HepG2 (cell line): ENCODE measurements at regions of chr20 and their contacts with region 1.

Region 1: GRCh38 chr20:16573001-16573965 is at the start of gene KIF16B:
- DNase-seq: peak; percentile 94
- ATAC-seq: peak; percentile 87
- H3K4me3 ChIP-seq: peak within 1 kb of the TSS; percentile 70 to 92 (median 85)
- H3K27ac ChIP-seq: peak within 1 kb of the TSS; percentile 77
- H3K4me1 ChIP-seq: peaks cover 62% of the 10 kb centered on the region
- H3K27me3 ChIP-seq: no peaks in the 10 kb centered on the region; a peak in 1 of 5 replicates
- CTCF ChIP-seq: peak; percentile 61
- EP300 ChIP-seq: peak; percentile 65 to 67; a peak in 2 of 4 replicates
- POLR2A ChIP-seq: peak; percentile 84 to 91
- RAD21 ChIP-seq: peak; percentile 81
- total RNA-seq, gene KIF16B: 18.0 and 23.3 TPM in 2 replicates

Region 2: DNA sequence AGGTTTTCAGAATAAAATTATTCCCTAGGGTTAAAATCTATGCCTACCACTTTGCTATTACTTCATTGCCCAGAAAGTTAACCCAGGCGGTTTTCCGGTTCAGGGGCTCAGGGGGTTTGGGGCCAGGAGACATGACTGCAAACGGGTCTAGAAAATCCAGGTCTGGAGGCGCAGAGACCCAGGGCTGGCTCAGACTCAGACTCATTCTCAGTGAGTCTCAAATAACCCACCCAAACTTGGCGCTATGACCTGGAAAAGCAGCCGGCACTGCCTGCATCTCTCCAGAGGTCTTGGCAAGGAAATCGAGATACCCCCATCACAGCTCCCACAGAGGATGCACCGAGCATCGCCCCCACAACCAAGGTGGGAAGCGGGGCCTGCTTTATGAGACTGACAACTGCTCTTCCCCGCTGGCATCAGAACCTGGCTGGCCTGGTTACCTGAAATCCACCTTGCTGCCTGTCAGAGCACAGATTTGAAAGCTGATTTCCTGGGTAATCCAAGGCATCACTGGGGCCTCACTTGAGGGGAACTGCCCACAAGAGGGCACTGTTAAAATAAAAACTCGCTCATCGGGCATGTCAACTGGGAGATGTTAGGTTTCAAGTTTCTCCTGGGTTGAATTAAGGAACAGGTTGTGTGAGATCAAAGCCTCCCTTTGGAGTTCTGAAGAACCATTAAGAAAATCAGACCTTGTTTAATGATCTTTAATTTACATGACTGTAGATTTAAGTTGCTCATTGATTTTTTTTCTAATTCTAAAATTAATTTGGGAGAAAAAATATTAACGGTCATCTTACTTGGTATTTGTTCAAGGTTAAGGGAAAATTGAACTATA is 55.1 kb before region 1 on chr20:
- CTCF ChIA-PET with region 1: no interaction called
- POLR2A ChIA-PET with region 1: no interaction called
- in situ Hi-C with region 1: no loop called
- intact Hi-C with region 1: loop called (anchors 5 kb)
- DNase-seq: peak; percentile 60
- ATAC-seq: peak; percentile 97
- H3K4me3 ChIP-seq: no peak overlapping the region
- H3K27ac ChIP-seq: no peak overlapping the region
- H3K4me1 ChIP-seq: no peaks in the 10 kb centered on the region
- H3K27me3 ChIP-seq: no peaks in the 10 kb centered on the region
- CTCF ChIP-seq: peak; percentile 71
- EP300 ChIP-seq: no peak
- POLR2A ChIP-seq: no peak
- RAD21 ChIP-seq: peak; percentile 82

Region 3: DNA sequence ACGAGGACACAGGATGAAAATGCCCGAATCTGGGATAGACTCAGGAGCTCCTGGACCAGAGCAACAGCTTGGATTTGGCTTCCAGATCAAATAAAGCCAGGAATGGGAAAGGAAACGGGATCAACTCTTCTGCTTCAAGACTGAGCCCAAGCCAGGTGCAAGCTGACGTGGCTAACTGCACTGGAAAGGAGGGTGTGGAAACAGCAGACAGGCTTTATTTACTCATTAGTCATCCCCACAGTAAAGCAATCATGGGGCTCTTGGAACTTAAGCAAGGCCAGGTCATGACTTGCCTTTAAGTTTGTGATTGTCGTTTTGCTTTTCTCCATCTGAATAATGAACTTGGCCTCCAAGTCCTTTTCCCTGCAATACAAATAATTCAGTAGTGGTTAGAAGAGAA is 45.2 kb before region 1 on chr20:
- CTCF ChIA-PET with region 1: no interaction called
- POLR2A ChIA-PET with region 1: no interaction called
- in situ Hi-C with region 1: no loop called
- intact Hi-C with region 1: loop called (anchors 2 kb)
- DNase-seq: peak; percentile 80
- ATAC-seq: peak; percentile 98
- H3K4me3 ChIP-seq: no peak overlapping the region
- H3K27ac ChIP-seq: peak overlapping the region; percentile 8
- H3K4me1 ChIP-seq: peaks cover 20% of the 10 kb centered on the region
- H3K27me3 ChIP-seq: no peaks in the 10 kb centered on the region
- CTCF ChIP-seq: no peak
- EP300 ChIP-seq: peak in 1 of 2 experiments; percentile 33; a peak in 1 of 4 replicates
- POLR2A ChIP-seq: no peak
- RAD21 ChIP-seq: no peak

Region 4: GRCh38 chr20:16729565-16730456 is 156.5 kb after region 1 on chr20 and contains the start of gene SNRPB2:
- CTCF ChIA-PET with region 1: no interaction called
- POLR2A ChIA-PET with region 1: interaction called, 3 read pairs
- in situ Hi-C with region 1: no loop called
- intact Hi-C with region 1: loop called (anchors 1 kb)
- DNase-seq: peak; percentile 97
- ATAC-seq: peak; percentile 98
- H3K4me3 ChIP-seq: peak within 1 kb of the TSS; percentile 82 to 98 (median 92)
- H3K27ac ChIP-seq: peak within 1 kb of the TSS; percentile 79
- H3K4me1 ChIP-seq: peaks cover 29% of the 10 kb centered on the region
- H3K27me3 ChIP-seq: peaks cover 0 to 12% of the 10 kb centered on the region in 2 experiments; a peak in 3 of 5 replicates
- CTCF ChIP-seq: peak; percentile 35
- EP300 ChIP-seq: peak; percentile 66 to 75; a peak in 3 of 4 replicates
- POLR2A ChIP-seq: peak; percentile 97 to 98
- RAD21 ChIP-seq: peak; percentile 74
- total RNA-seq, gene SNRPB2: 204 and 278 TPM in 2 replicates